Ascending aorta (tissue), 2 donors: ENCODE measurements at regions of chr2 and their contacts with region 1.

Region 1: GRCh38 chr2:10009811-10010292 is 33.5 kb upstream of the KLF11 start:
- DNase-seq: peak; percentile 26 to 93
- H3K4me3 ChIP-seq: no peak overlapping the region
- H3K27ac ChIP-seq: peak overlapping the region; percentile 55 to 76
- H3K4me1 ChIP-seq: peaks cover 13 to 44% of the 10 kb centered on the region in 2 donors
- H3K27me3 ChIP-seq: no peaks in the 10 kb centered on the region
- CTCF ChIP-seq: no peak

Region 2: DNA sequence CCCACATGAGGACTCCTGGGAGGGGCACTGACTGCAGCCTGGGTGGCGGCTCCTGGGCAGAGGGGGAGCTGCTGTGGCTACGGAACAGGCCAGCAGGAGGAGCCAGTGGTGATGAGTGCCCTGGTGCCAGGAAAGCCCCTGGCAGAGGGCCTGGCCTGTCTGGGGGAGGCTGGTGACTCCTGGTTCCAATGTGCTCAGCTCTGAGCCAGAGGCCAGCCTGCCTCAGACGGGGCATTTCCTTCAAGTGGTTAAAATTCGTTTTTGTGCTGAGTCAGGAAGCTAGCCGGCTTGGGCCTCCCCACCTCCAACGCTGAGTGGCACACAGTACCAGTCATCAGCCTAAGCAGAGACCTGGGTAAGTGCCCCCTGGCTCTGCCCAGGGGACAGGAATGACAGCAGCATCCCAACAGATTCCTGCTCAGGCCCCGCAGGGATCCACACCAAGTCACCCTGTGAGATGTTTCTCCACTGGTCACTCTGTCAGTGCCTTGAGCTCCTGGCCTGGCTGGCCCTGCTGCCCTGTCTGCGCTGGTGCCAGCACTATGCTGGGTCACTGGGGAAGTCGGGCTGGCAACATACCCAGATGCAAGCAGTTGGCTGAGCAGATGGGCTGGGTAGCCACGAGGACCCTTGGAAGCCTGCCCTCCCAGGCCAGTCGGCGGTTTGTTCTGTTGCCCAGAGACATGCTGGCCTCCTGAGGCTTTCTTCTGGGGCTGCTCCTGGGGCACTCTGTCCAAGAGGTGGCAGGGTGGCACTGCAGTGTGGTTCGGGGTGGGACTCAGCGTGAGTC is 26.4 kb after region 1 on chr2:
- intact Hi-C with region 1: loop called (anchors 2 kb)
- DNase-seq: peak; percentile 77 to 95
- H3K4me3 ChIP-seq: peak overlapping the region in 1 of 2 donors; percentile 15
- H3K27ac ChIP-seq: peak overlapping the region; percentile 85 to 90
- H3K4me1 ChIP-seq: peaks cover 16 to 42% of the 10 kb centered on the region in 2 donors
- H3K27me3 ChIP-seq: no peaks in the 10 kb centered on the region
- CTCF ChIP-seq: peak; percentile 74 to 76 (median 75)

Region 3: GRCh38 chr2:10064932-10065772 is 55.3 kb after region 1 on chr2:
- intact Hi-C with region 1: no loop called
- DNase-seq: no peak
- H3K4me3 ChIP-seq: no peak overlapping the region
- H3K27ac ChIP-seq: no peak overlapping the region
- H3K4me1 ChIP-seq: no peaks in the 10 kb centered on the region
- H3K27me3 ChIP-seq: no peaks in the 10 kb centered on the region
- CTCF ChIP-seq: no peak

Region 4: DNA sequence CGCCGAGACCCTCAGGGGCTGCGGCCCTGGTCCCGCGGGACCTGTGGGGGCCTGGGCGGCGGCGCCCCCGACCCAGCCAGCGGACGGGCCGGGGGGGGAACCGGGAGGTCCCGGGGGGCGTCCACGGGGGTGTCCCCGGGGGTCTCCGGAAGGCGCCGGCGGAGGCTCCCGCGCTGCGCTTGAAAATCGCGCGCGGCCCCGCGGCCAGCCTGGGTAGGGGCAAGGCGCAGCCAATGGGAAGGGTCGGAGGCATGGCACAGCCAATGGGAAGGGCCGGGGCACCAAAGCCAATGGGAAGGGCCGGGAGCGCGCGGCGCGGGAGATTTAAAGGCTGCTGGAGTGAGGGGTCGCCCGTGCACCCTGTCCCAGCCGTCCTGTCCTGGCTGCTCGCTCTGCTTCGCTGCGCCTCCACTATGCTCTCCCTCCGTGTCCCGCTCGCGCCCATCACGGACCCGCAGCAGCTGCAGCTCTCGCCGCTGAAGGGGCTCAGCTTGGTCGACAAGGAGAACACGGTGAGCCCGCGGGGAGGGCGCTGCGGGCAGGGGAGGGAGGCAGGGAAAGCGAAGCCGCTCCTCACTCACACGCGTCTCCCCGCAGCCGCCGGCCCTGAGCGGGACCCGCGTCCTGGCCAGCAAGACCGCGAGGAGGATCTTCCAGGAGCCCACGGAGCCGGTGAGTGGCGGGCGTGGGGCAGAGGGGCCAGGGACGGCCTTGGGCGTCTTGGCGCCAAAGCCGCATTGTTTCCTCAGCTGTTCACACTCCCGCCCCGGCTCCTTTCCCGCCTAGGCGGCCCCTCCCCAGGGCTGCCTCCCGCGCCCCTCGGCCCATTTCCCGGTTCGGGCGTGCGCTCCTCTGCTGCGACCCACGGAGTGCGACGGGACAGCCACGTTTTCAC is 112.8 kb after region 1 on chr2 and contains the start of gene RRM2:
- intact Hi-C with region 1: no loop called
- DNase-seq: peak; percentile 76 to 94
- H3K4me3 ChIP-seq: peak within 1 kb of the TSS; percentile 47 to 69
- H3K27ac ChIP-seq: no peak within 1 kb of the TSS
- H3K4me1 ChIP-seq: peaks cover 13 to 20% of the 10 kb centered on the region in 2 donors
- H3K27me3 ChIP-seq: peaks cover 7% of the 10 kb centered on the region
- CTCF ChIP-seq: no peak
- total RNA-seq, gene RRM2: not detected